Prostate gland (tissue), 2 donors: ENCODE measurements at regions of chr17 and their contacts with region 1.

Region 1: DNA sequence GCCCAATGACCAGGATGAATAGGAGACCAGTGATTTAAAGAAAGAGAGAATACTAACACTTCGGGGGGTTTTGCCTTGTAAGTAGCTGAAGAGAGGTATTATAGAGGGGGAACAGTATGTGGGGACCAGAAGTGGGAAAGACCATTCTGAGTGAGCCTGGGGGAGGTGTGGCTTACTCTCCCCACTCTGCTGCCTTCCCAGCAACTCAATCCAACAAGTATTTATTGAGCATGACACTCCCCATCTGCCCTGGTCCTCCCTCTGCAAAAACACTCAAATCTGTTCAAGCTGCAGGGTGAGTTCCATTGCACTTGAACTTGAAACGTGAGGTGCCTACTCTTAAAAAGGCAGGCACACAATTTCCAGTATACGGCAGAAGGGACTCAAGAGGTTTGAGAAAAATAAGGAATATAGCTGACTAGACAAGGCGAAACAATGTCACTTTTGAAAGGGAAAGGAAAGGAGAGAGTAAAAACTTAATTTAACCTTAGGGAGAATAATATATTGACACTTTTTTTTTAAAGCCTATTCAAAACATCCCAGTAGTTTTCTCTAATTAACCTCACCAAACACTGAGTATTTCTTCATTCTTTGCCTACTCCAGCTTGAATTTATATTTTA is 8.2 kb downstream of the FAM117A start:
- DNase-seq: no peak
- H3K4me3 ChIP-seq: no peak overlapping the region
- H3K27ac ChIP-seq: no peak overlapping the region
- H3K4me1 ChIP-seq: no peaks in the 10 kb centered on the region
- H3K27me3 ChIP-seq: no peaks in the 10 kb centered on the region
- CTCF ChIP-seq: no peak
- POLR2A ChIP-seq: no peak

Region 2: DNA sequence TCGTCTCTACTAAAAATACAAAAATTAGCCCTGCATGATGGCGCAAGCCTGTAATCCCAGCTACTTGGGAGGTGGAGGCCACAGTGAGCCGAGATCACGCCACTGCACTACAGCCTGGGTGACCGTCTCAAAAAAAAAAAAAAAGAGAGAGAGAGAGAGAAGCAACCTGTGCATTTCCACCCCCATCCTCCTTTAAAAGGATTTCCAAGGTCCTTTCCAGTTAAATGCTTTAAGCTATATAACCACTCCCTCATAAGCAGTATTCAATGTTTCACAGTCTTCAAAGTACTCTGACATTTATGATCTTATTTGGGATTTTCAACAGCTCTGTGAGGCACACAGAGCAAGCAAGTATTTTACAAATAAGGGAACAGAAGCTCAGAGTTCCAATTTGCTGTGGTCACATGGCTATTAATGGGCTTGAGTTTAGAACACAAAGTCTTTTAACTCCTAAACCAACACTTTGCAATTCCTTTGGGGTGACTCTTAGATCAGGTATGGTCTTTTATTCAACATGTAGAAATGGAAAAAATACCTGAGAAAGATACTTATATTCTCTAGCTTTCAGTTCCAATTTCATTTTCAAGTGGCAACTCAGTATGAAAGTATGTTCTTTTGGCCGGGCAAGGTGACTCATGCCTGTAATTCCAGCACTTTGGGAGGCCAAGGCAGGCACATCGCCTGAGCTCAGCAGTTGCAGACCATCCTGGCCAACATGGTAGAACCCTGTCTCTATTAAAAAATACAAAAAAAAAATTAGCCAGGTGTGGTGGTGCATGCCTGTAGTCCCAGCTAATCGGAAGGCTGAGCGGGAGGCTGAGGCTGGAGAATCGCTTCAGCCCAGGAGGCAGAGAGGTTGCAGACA is 109.2 kb before region 1 on chr17:
- intact Hi-C with region 1: no loop called
- DNase-seq: no peak
- H3K4me3 ChIP-seq: no peak overlapping the region
- H3K27ac ChIP-seq: peak overlapping the region; percentile 68 to 73
- H3K4me1 ChIP-seq: no peaks in the 10 kb centered on the region
- H3K27me3 ChIP-seq: no peaks in the 10 kb centered on the region
- CTCF ChIP-seq: no peak
- POLR2A ChIP-seq: no peak

Region 3: DNA sequence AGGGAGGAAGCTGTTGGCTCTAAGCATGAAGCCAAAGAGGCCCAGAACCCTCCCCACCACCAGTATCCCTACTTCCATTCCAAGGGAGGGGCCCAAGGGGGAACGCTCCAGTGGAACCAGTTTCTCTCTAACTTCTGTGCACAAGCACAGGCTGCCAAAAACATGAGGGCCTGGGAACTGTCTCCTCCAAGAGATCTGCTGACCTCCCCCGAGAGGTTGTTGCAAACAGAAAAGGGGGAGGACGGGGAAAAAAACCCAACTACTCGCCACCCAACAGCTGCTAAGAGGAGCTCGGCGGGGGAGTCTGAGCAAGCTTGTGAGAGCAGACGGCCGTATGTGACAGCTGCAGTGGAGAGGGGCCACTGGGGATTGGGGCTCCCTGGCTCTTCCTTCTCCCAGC is 32.4 kb before region 1 on chr17:
- intact Hi-C with region 1: loop called (anchors 5 kb)
- DNase-seq: no peak
- H3K4me3 ChIP-seq: no peak overlapping the region
- H3K27ac ChIP-seq: peak overlapping the region; percentile 35 to 62
- H3K4me1 ChIP-seq: peaks cover 11% of the 10 kb centered on the region
- H3K27me3 ChIP-seq: no peaks in the 10 kb centered on the region
- CTCF ChIP-seq: no peak
- POLR2A ChIP-seq: no peak